ENCODE measurements at regions of chr14 and their contacts with region 1.

Region 1: GRCh38 chr14:37709419-37710195 is 114.2 kb downstream of the TTC6 start:
- DNase-seq: peak; percentile 33
- H3K4me3 Mint-ChIP-seq: no peak overlapping the region
- H3K27ac Mint-ChIP-seq: no peak overlapping the region
- H3K4me1 Mint-ChIP-seq: no peaks in the 10 kb centered on the region
- H3K27me3 Mint-ChIP-seq: no peaks in the 10 kb centered on the region
- CTCF ChIP-seq: peak; percentile 37

Region 2: DNA sequence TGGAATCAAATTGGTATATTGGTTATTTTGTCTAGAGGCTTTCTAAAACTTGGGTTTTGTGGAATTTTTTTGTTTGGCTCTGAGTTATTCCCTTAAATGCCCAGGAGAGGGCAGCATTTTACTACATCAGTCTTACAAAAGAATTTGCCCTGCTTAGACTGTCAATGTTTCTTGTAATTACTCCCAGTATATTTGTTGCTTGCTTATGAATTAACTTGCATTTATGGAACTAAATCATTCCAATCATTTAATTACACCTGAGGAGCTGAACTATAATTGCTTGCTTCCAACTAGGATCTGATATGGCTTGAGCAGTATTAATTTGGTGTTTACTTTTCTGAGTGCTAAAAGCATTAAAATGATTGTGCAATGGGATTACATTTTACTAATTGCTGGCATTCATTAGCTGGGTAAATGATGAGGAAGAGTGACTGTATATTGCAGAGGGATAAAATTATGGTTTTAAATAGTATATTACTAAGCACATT is 463.1 kb before region 1 on chr14:
- CTCF ChIA-PET with region 1: interaction called, 3 read pairs
- POLR2A ChIA-PET with region 1: no interaction called
- intact Hi-C with region 1: loop called (anchors 1 kb)
- DNase-seq: peak; percentile 64
- H3K4me3 Mint-ChIP-seq: no peak overlapping the region
- H3K27ac Mint-ChIP-seq: no peak overlapping the region
- H3K4me1 Mint-ChIP-seq: no peaks in the 10 kb centered on the region
- H3K27me3 Mint-ChIP-seq: no peaks in the 10 kb centered on the region
- CTCF ChIP-seq: peak; percentile 63

Region 3: DNA sequence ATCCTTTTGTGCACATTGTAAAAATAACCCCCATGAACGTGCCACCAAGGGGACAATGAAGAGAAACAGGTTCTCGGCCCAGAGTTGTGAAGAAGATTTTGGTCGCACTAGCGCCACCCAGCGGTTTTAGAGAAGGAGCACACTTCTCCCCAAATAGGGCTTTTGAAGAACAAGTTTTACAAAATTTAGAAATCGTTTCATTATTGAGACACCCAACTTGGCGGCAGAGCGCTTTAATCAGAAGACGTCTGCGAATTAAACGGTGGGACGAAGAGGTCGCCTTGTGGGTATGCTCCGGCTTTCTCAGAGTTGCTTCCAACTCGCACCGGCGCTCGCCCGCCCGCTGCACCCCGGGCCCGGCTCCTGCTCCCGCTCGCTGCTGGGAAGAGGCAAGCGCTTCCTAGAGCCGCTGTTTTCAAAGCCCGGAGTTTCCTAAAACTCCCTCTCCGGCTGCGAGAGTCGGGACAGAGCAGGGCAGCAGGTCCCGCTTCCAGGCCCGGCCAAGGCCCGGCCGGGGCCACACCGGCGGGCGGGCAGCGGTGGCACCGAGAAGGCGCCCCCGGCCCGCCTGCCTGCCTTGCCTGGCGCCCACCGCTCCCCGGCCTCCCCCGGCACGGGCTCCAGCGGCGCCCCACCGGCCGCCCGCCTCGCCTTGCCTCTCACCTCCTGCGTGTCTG is 115.2 kb before region 1 on chr14:
- CTCF ChIA-PET with region 1: interaction called, 3 read pairs
- POLR2A ChIA-PET with region 1: no interaction called
- intact Hi-C with region 1: loop called (anchors 10 kb)
- DNase-seq: peak; percentile 94
- H3K4me3 Mint-ChIP-seq: peak overlapping the region; percentile 84
- H3K27ac Mint-ChIP-seq: peak overlapping the region; percentile 43
- H3K4me1 Mint-ChIP-seq: peaks cover 7% of the 10 kb centered on the region
- H3K27me3 Mint-ChIP-seq: no peaks in the 10 kb centered on the region
- CTCF ChIP-seq: peak; percentile 82

Region 4: GRCh38 chr14:37623423-37623951 is 86.1 kb before region 1 on chr14:
- CTCF ChIA-PET with region 1: no interaction called
- POLR2A ChIA-PET with region 1: no interaction called
- intact Hi-C with region 1: no loop called
- DNase-seq: peak; percentile 97
- H3K4me3 Mint-ChIP-seq: no peak overlapping the region
- H3K27ac Mint-ChIP-seq: peak overlapping the region; percentile 72
- H3K4me1 Mint-ChIP-seq: peaks cover 6% of the 10 kb centered on the region
- H3K27me3 Mint-ChIP-seq: no peaks in the 10 kb centered on the region
- CTCF ChIP-seq: no peak

Region 5: DNA sequence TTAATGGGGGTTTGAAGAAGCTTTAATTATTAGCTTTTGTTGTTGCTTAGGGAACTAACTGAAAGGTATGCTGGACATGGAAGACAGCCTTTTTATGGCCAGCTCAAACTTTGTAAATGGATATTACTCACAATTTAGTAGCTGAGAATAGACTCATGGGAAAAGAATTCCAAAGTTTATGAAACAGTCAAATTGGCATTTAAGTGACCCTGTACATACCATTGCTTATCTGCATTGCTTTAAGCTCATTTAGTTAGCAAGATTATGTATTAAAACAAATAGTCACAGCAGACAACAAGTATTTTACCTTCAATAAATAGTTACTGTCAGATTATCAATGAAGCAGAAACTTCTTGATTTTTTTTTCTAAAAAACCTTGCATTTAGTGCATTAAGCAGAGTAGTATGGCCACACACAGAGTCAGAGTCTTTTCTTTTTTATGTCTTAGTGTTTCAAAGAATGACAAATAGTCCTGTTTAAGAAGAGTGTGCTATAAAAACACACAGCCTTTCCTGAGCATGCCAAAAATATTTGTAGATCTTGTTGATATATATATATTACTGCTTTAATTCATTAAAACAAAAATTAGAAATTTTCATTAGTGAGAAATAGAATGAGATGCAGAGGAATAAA is 12.0 kb before region 1 on chr14:
- CTCF ChIA-PET with region 1: interaction called, 10 read pairs
- POLR2A ChIA-PET with region 1: no interaction called
- intact Hi-C with region 1: no loop called
- DNase-seq: peak; percentile 14
- H3K4me3 Mint-ChIP-seq: no peak overlapping the region
- H3K27ac Mint-ChIP-seq: no peak overlapping the region
- H3K4me1 Mint-ChIP-seq: no peaks in the 10 kb centered on the region
- H3K27me3 Mint-ChIP-seq: no peaks in the 10 kb centered on the region
- CTCF ChIP-seq: no peak

Region 6: DNA sequence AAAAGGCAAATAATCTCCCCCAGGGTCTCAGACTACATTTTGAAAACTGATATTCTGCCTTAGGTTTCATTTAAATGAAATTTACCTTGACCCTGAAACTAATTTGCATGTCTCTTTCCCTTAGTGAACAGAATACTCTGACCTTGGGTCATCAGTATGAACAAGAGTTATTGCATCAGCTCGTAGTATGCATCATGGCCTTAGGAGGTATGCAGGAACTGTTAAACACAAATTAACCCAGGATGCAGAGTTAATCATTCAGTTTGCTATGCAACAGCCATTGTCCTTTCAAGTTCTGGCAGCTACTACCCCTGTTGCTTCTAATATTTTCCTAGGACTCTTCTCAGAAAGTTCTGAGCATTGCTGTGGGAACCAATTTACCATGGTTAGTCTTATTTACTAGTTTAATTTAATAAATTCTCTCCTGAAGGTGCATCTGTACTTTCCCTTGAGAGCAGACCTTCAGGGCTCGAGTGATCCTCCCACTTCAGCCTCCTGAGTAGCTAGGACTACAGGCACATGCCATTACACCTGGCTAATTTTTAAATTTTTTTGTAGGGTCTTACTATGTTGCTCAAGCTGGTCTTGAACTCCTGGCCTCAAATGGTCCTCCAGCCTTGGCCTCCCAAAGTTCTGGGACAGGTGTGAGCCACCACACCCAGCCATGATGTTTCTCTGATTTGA is 12.5 kb after region 1 on chr14:
- CTCF ChIA-PET with region 1: interaction called, 13 read pairs
- POLR2A ChIA-PET with region 1: no interaction called
- intact Hi-C with region 1: no loop called
- DNase-seq: peak; percentile 23
- H3K4me3 Mint-ChIP-seq: no peak overlapping the region
- H3K27ac Mint-ChIP-seq: no peak overlapping the region
- H3K4me1 Mint-ChIP-seq: no peaks in the 10 kb centered on the region
- H3K27me3 Mint-ChIP-seq: no peaks in the 10 kb centered on the region
- CTCF ChIP-seq: no peak

Region 7: GRCh38 chr14:37874429-37875191 is 165.0 kb after region 1 on chr14:
- CTCF ChIA-PET with region 1: interaction called, 74 read pairs
- POLR2A ChIA-PET with region 1: interaction called, 12 read pairs
- intact Hi-C with region 1: loop called (anchors 1 kb)
- DNase-seq: peak; percentile 83
- H3K4me3 Mint-ChIP-seq: no peak overlapping the region
- H3K27ac Mint-ChIP-seq: no peak overlapping the region
- H3K4me1 Mint-ChIP-seq: peaks cover 22% of the 10 kb centered on the region
- H3K27me3 Mint-ChIP-seq: no peaks in the 10 kb centered on the region
- CTCF ChIP-seq: peak; percentile 77